ENCODE measurements at regions of chr2 and their contacts with region 1.

Region 1: GRCh38 chr2:45993476-45993991 is 303.7 kb upstream of the EPAS1 start:
- DNase-seq: peak; percentile 30 to 82
- ATAC-seq: peak; percentile 65 to 75 (median 71)
- H3K4me3 ChIP-seq: no peak overlapping the region
- H3K4me3 Mint-ChIP-seq: no peak overlapping the region
- H3K27ac ChIP-seq: no peak overlapping the region
- H3K27ac Mint-ChIP-seq: no peak overlapping the region
- H3K4me1 ChIP-seq: no peaks in the 10 kb centered on the region
- H3K4me1 Mint-ChIP-seq: no peaks in the 10 kb centered on the region
- H3K27me3 ChIP-seq: no peaks in the 10 kb centered on the region
- H3K27me3 Mint-ChIP-seq: no peaks in the 10 kb centered on the region
- CTCF ChIP-seq: peak; percentile 81

Region 2: GRCh38 chr2:45729753-45730512 is 263.6 kb before region 1 on chr2:
- intact Hi-C with region 1: no loop called
- DNase-seq: peak in 1 of 2 donors; percentile 28
- ATAC-seq: peak; percentile 50 to 64 (median 50)
- H3K4me3 ChIP-seq: no peak overlapping the region
- H3K4me3 Mint-ChIP-seq: no peak overlapping the region
- H3K27ac ChIP-seq: peak overlapping the region; percentile 76
- H3K27ac Mint-ChIP-seq: no peak overlapping the region
- H3K4me1 ChIP-seq: peaks cover 14% of the 10 kb centered on the region
- H3K4me1 Mint-ChIP-seq: peaks cover 8 to 18% of the 10 kb centered on the region in 2 donors
- H3K27me3 ChIP-seq: no peaks in the 10 kb centered on the region
- H3K27me3 Mint-ChIP-seq: no peaks in the 10 kb centered on the region
- CTCF ChIP-seq: peak; percentile 22

Region 3: DNA sequence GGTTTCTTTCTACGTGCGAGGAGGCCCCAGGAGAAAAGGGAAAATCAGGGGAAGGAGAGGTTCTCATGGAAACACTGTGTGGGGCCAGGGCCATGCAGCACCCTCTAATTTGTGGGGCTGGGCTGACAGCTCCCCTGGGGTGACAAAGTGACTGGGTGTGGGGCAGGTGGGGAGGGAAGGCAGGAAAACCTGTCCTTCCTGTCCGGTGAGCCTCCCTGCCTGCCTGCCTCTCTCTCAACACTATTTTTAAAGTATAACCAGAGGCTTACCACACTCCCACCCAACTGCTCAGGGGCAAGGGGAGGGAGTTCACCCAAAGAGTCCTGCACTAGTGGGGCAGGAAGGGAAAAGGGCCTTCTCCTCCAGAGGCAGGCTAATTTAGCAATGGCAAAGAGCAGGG is 293.2 kb after region 1 on chr2:
- intact Hi-C with region 1: no loop called
- DNase-seq: no peak
- ATAC-seq: no peak
- H3K4me3 ChIP-seq: no peak overlapping the region
- H3K4me3 Mint-ChIP-seq: no peak overlapping the region
- H3K27ac ChIP-seq: no peak overlapping the region
- H3K27ac Mint-ChIP-seq: no peak overlapping the region
- H3K4me1 ChIP-seq: no peaks in the 10 kb centered on the region
- H3K4me1 Mint-ChIP-seq: no peaks in the 10 kb centered on the region
- H3K27me3 ChIP-seq: no peaks in the 10 kb centered on the region
- H3K27me3 Mint-ChIP-seq: peaks cover 9 to 19% of the 10 kb centered on the region in 2 donors
- CTCF ChIP-seq: no peak

Region 4: GRCh38 chr2:46364797-46365457 is 371.4 kb after region 1 on chr2:
- intact Hi-C with region 1: loop called (anchors 5 kb)
- DNase-seq: peak in 1 of 2 donors; percentile 78
- ATAC-seq: peak in 1 of 3 donors; percentile 27
- H3K4me3 ChIP-seq: no peak overlapping the region
- H3K4me3 Mint-ChIP-seq: no peak overlapping the region
- H3K27ac ChIP-seq: no peak overlapping the region
- H3K27ac Mint-ChIP-seq: no peak overlapping the region
- H3K4me1 ChIP-seq: peaks cover 23% of the 10 kb centered on the region
- H3K4me1 Mint-ChIP-seq: peaks cover 37% of the 10 kb centered on the region in 2 donors
- H3K27me3 ChIP-seq: no peaks in the 10 kb centered on the region
- H3K27me3 Mint-ChIP-seq: peaks cover 13 to 23% of the 10 kb centered on the region in 2 donors
- CTCF ChIP-seq: peak; percentile 92

Region 5: DNA sequence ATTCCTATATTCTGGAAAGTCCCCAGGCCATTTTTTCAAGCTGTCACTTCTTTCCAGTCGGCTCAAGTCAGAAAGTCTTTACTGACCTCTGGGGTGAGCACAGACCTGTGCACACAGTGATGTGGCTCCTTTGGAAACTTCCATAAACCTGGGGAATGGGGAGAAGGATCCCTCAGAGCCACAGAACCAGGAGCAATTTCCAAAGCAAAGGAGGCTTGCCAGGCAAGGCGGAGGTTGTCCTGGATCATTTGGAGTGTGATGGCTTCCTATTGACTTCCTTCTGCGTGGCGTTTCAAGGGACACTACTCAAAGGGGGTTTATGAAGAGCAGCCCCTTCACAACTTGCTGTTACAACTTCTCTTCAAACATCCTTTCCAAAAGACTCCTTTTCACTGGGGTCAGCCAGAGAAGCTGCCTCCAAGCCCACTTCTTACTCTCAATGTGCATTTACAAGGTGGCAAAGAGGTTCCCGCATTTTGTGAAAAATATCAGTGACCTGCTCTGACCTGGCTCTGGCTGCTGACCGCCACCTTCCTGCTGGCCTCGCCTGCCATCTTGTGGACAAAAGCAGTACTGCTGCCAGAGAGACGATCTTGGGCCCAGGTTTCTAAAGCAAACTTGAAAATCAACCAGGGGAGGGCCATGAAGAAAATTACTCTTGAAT is 467.6 kb after region 1 on chr2:
- intact Hi-C with region 1: loop called (anchors 1 kb)
- DNase-seq: peak; percentile 80 to 83
- ATAC-seq: peak; percentile 77 to 82 (median 81)
- H3K4me3 ChIP-seq: no peak overlapping the region
- H3K4me3 Mint-ChIP-seq: no peak overlapping the region
- H3K27ac ChIP-seq: no peak overlapping the region
- H3K27ac Mint-ChIP-seq: peak overlapping the region in 1 of 2 donors; percentile 0
- H3K4me1 ChIP-seq: peaks cover 10% of the 10 kb centered on the region
- H3K4me1 Mint-ChIP-seq: peaks cover 16% of the 10 kb centered on the region in 2 donors
- H3K27me3 ChIP-seq: no peaks in the 10 kb centered on the region
- H3K27me3 Mint-ChIP-seq: peaks cover 5 to 7% of the 10 kb centered on the region in 2 donors
- CTCF ChIP-seq: peak; percentile 99

Region 6: DNA sequence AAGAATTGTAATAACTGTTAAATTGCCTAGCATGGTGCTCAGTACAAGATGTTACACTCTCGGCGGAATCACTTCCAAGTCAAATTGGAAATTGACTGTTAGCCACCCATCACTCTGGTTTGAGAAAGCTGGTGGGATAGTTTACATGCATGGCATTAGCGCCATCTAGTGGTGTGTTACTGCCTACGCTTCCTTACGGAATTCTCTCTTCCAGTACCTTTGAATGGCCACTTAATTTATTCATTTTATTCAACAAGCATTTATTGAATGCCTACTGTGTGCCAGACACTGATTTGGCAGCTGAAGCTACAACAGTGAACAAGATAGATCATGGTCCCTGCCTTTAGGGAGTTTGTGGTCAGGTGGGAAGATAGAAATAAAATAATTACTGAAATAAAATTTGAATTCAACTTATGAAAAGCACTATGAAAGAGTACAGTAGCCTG is 657.0 kb after region 1 on chr2:
- intact Hi-C with region 1: loop called (anchors 5 kb)
- DNase-seq: peak; percentile 44 to 90
- ATAC-seq: peak; percentile 84 to 93 (median 85)
- H3K4me3 ChIP-seq: no peak overlapping the region
- H3K4me3 Mint-ChIP-seq: no peak overlapping the region
- H3K27ac ChIP-seq: no peak overlapping the region
- H3K27ac Mint-ChIP-seq: no peak overlapping the region
- H3K4me1 ChIP-seq: no peaks in the 10 kb centered on the region
- H3K4me1 Mint-ChIP-seq: no peaks in the 10 kb centered on the region
- H3K27me3 ChIP-seq: no peaks in the 10 kb centered on the region
- H3K27me3 Mint-ChIP-seq: no peaks in the 10 kb centered on the region
- CTCF ChIP-seq: peak; percentile 98

Measured in natural killer cell (primary cell).